B cell (primary cell): ENCODE measurements at regions of chr15 and their contacts with region 1.

Region 1: GRCh38 chr15:40108855-40109735 is at the start of gene BMF:
- DNase-seq: peak; percentile 96
- ATAC-seq: peak; percentile 68
- H3K4me3 ChIP-seq: peak within 1 kb of the TSS; percentile 57 to 88 (median 86)
- H3K4me3 Mint-ChIP-seq: peak within 1 kb of the TSS; percentile 90
- H3K27ac ChIP-seq: peak within 1 kb of the TSS; percentile 97 to 98
- H3K27ac Mint-ChIP-seq: peak within 1 kb of the TSS; percentile 97
- H3K4me1 ChIP-seq: peaks cover 47 to 56% of the 10 kb centered on the region in 2 donors
- H3K4me1 Mint-ChIP-seq: peaks cover 57% of the 10 kb centered on the region
- H3K27me3 ChIP-seq: no peaks in the 10 kb centered on the region
- H3K27me3 Mint-ChIP-seq: no peaks in the 10 kb centered on the region
- CTCF ChIP-seq: peak; percentile 29
- total RNA-seq, gene BMF: 343 and 344 TPM in 2 replicates

Region 2: DNA sequence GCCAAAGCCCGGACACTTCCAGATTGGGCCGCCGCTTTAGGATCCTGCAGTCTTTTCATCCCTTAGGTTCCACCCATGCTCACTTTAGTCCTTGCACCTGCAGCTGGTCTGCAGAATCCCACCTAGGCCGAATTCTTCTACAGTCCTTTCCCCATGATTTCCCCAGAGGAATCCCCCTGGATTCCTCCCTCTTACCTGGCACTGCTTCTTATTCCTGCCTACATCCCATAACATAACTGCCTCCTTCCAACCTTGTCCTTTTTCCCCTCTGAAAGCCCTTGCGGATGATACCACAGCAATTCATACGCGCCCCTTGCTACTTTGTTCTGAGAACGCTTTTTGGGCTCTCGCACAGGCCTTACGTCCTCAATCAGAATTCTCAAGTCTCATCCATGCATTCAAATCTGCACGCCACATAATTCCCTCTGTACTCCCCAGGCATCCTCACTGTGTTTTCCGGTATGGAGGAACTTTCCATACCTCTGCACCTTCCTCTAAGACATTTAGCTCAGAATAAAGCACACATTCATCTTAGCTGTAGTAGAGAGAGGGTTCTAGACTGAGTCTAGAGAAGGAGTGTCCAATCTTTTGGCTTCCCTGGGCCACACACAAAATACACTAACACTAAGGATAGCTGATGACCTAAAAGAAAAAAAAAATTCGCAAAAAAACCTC is 174.6 kb before region 1 on chr15:
- CTCF ChIA-PET with region 1: no interaction called
- POLR2A ChIA-PET with region 1: no interaction called
- intact Hi-C with region 1: loop called (anchors 5 kb)
- DNase-seq: no peak
- ATAC-seq: no peak
- H3K4me3 ChIP-seq: peak overlapping the region; percentile 45 to 80 (median 68)
- H3K4me3 Mint-ChIP-seq: peak overlapping the region; percentile 91
- H3K27ac ChIP-seq: peak overlapping the region in 1 of 2 donors; percentile 71
- H3K27ac Mint-ChIP-seq: peak overlapping the region; percentile 39
- H3K4me1 ChIP-seq: peaks cover 13 to 23% of the 10 kb centered on the region in 2 donors
- H3K4me1 Mint-ChIP-seq: peaks cover 38% of the 10 kb centered on the region
- H3K27me3 ChIP-seq: peaks cover 0 to 12% (median 3%) of the 10 kb centered on the region in 4 experiments
- H3K27me3 Mint-ChIP-seq: peaks cover 16% of the 10 kb centered on the region
- CTCF ChIP-seq: no peak

Region 3: GRCh38 chr15:40044717-40045571 is 64.2 kb before region 1 on chr15:
- CTCF ChIA-PET with region 1: interaction called, 934 read pairs
- POLR2A ChIA-PET with region 1: interaction called, 324 read pairs
- intact Hi-C with region 1: loop called (anchors 1 kb)
- DNase-seq: peak; percentile 90
- ATAC-seq: peak; percentile 94
- H3K4me3 ChIP-seq: peak overlapping the region in 2 of 5 experiments; percentile 26 to 34
- H3K4me3 Mint-ChIP-seq: peak overlapping the region; percentile 52
- H3K27ac ChIP-seq: peak overlapping the region; percentile 65 to 69
- H3K27ac Mint-ChIP-seq: peak overlapping the region; percentile 86
- H3K4me1 ChIP-seq: peaks cover 57 to 64% of the 10 kb centered on the region in 2 donors
- H3K4me1 Mint-ChIP-seq: peaks cover 62% of the 10 kb centered on the region
- H3K27me3 ChIP-seq: no peaks in the 10 kb centered on the region
- H3K27me3 Mint-ChIP-seq: no peaks in the 10 kb centered on the region
- CTCF ChIP-seq: peak; percentile 97

Region 4: DNA sequence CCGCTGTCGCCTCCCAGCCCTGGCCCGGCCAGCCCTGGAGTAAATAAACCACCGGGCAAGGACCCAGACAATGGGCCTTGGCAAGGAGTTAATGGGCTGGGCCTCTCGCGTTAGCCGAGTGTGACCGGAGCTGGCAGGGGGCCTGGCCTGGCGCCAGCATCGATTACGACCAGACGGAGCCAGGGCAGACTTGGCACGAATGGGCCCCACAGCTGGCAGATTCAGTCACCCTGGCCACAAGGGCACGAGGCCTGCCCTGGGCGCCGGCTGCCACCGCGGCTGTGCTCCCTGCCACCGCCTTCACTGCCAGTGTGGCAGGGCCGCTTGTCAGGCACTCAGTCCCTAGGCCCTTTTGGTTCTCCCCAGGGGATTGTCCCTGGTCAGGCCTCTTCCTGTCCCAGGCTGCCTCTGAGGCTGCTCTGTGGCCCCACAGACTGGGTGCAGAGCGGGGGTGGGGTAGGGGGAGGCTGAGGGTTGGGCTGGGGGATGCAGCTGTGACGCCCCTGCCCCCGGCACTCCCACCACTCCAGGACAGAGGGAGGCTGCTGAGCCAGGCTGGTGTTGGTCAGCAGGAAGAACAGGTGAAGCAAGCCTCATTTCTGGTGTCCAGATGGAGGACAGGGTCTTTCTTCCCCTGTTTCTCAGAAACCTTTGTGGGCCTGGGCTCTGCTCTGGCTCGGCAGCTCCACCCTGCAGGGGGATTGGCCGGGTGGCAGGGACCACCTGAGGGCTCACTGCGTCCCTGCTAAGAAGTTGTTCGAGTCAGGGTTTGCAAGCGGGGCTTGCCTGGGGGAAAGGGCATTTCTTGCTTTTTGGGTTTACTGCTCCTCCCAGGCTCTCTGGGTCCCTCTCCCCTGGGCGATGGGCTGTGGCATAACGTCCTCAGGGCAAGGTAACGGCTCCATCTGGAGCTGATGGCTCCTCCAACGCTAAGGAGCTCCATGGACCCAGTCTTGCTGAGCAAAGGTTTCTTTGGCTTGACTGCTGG is 39.6 kb before region 1 on chr15:
- CTCF ChIA-PET with region 1: interaction called, 61 read pairs
- POLR2A ChIA-PET with region 1: interaction called, 43 read pairs
- intact Hi-C with region 1: loop called (anchors 1 kb)
- DNase-seq: peak; percentile 75
- ATAC-seq: peak; percentile 78
- H3K4me3 ChIP-seq: no peak overlapping the region
- H3K4me3 Mint-ChIP-seq: peak overlapping the region; percentile 39
- H3K27ac ChIP-seq: peak overlapping the region; percentile 54 to 78
- H3K27ac Mint-ChIP-seq: peak overlapping the region; percentile 90
- H3K4me1 ChIP-seq: peaks cover 34 to 38% of the 10 kb centered on the region in 2 donors
- H3K4me1 Mint-ChIP-seq: peaks cover 41% of the 10 kb centered on the region
- H3K27me3 ChIP-seq: no peaks in the 10 kb centered on the region
- H3K27me3 Mint-ChIP-seq: no peaks in the 10 kb centered on the region
- CTCF ChIP-seq: no peak

Region 5: DNA sequence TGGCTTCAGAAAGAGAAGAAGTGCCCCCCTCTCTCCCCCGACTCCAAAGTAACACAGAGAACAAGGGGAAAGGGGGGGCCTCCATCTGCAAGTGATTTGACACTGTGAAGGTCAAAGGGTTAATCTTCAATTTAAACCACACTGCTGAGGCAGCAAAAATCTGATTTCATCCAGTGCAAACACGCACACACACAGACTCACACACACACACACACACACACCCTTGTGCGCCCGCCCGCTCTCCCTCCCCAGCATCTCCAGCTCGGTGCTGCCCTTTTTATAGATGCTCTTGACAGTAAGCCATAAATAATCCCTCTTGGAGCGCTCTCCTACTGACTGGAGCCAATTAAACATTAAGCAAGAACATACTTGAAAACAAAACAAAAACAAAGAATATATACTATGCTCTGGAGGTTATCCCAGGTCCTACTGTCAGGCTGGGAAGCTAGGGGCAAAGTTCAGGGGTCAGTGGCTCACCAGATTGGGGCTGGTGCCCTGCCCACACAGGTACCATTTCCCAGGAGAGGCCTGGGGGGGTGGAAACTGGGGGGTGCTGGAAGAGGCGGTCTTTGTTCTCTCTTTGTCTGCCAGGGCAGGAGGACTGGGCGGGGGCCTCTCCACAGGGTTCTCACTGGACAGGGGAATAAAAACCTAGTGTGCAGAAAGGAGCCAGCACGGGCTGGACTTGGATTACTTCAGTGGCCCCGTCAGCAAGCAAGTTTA is 16.7 kb before region 1 on chr15:
- CTCF ChIA-PET with region 1: interaction called, 489 read pairs
- POLR2A ChIA-PET with region 1: interaction called, 130 read pairs
- intact Hi-C with region 1: loop called (anchors 2 kb)
- DNase-seq: no peak
- ATAC-seq: no peak
- H3K4me3 ChIP-seq: peak overlapping the region in 1 of 5 experiments; percentile 38
- H3K4me3 Mint-ChIP-seq: peak overlapping the region; percentile 87
- H3K27ac ChIP-seq: peak overlapping the region; percentile 99 to 100
- H3K27ac Mint-ChIP-seq: peak overlapping the region; percentile 98
- H3K4me1 ChIP-seq: peaks cover 61 to 73% of the 10 kb centered on the region in 2 donors
- H3K4me1 Mint-ChIP-seq: peaks cover 75% of the 10 kb centered on the region
- H3K27me3 ChIP-seq: no peaks in the 10 kb centered on the region
- H3K27me3 Mint-ChIP-seq: no peaks in the 10 kb centered on the region
- CTCF ChIP-seq: no peak

Region 6: GRCh38 chr15:40182358-40183029 is 73.4 kb after region 1 on chr15:
- CTCF ChIA-PET with region 1: interaction called, 15 read pairs
- POLR2A ChIA-PET with region 1: interaction called, 4 read pairs
- intact Hi-C with region 1: no loop called
- DNase-seq: peak; percentile 19
- ATAC-seq: peak; percentile 49
- H3K4me3 ChIP-seq: no peak overlapping the region
- H3K4me3 Mint-ChIP-seq: peak overlapping the region; percentile 52
- H3K27ac ChIP-seq: peak overlapping the region in 1 of 2 donors; percentile 75
- H3K27ac Mint-ChIP-seq: peak overlapping the region; percentile 62
- H3K4me1 ChIP-seq: peaks cover 28 to 37% of the 10 kb centered on the region in 2 donors
- H3K4me1 Mint-ChIP-seq: peaks cover 32% of the 10 kb centered on the region
- H3K27me3 ChIP-seq: no peaks in the 10 kb centered on the region
- H3K27me3 Mint-ChIP-seq: no peaks in the 10 kb centered on the region
- CTCF ChIP-seq: no peak